ENCODE measurements at regions of chr3 and their contacts with region 1.

Region 1: GRCh38 chr3:132029182-132029902 is 5.5 kb downstream of the CPNE4 start:
- DNase-seq: peak; percentile 32
- ATAC-seq: no peak
- H3K4me3 ChIP-seq: no peak overlapping the region
- H3K4me3 Mint-ChIP-seq: no peak overlapping the region
- H3K27ac ChIP-seq: no peak overlapping the region
- H3K27ac Mint-ChIP-seq: no peak overlapping the region
- H3K4me1 ChIP-seq: no peaks in the 10 kb centered on the region
- H3K4me1 Mint-ChIP-seq: peaks cover 2% of the 10 kb centered on the region
- H3K27me3 ChIP-seq: peaks cover 0 to 12% (median 7%) of the 10 kb centered on the region in 4 experiments
- H3K27me3 Mint-ChIP-seq: peaks cover 49% of the 10 kb centered on the region
- CTCF ChIP-seq: peak; percentile 58

Region 2: DNA sequence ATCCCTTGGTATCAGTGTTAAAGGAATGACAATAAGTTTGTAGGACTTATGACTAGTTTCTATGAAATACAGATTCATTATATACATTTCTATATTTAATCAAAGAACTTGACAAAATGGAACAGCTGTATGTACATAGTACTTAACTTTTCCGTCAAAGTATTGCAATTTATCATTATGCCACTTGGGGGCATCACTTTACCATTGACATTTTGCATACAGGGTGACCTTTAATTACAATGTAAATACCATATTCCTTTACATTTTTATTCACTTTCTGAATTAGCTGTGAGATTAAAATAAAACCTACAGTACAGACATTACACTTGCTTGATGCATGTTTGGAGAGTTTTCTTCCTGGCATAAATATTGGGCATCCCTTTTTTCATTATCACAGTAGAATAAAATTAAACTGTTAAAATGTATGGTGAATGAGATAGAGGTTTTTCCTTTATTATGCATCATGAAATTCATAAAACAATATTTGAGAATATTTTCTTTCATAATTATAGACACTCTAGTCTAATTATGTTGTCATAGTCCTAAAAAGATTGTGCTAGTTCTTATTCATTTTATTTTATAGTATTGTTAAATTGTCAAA is 995.8 kb before region 1 on chr3:
- CTCF ChIA-PET with region 1: interaction called, 12 read pairs
- POLR2A ChIA-PET with region 1: no interaction called
- intact Hi-C with region 1: no loop called
- DNase-seq: peak; percentile 62
- ATAC-seq: peak; percentile 54
- H3K4me3 ChIP-seq: no peak overlapping the region
- H3K4me3 Mint-ChIP-seq: no peak overlapping the region
- H3K27ac ChIP-seq: no peak overlapping the region
- H3K27ac Mint-ChIP-seq: no peak overlapping the region
- H3K4me1 ChIP-seq: no peaks in the 10 kb centered on the region
- H3K4me1 Mint-ChIP-seq: no peaks in the 10 kb centered on the region
- H3K27me3 ChIP-seq: no peaks in the 10 kb centered on the region
- H3K27me3 Mint-ChIP-seq: no peaks in the 10 kb centered on the region
- CTCF ChIP-seq: peak; percentile 87

Region 3: GRCh38 chr3:132180337-132180791 is 151.0 kb after region 1 on chr3:
- CTCF ChIA-PET with region 1: no interaction called
- POLR2A ChIA-PET with region 1: no interaction called
- intact Hi-C with region 1: no loop called
- DNase-seq: peak; percentile 34
- ATAC-seq: no peak
- H3K4me3 ChIP-seq: no peak overlapping the region
- H3K4me3 Mint-ChIP-seq: no peak overlapping the region
- H3K27ac ChIP-seq: no peak overlapping the region
- H3K27ac Mint-ChIP-seq: no peak overlapping the region
- H3K4me1 ChIP-seq: no peaks in the 10 kb centered on the region
- H3K4me1 Mint-ChIP-seq: peaks cover 2% of the 10 kb centered on the region
- H3K27me3 ChIP-seq: peaks cover 0 to 5% (median 0%) of the 10 kb centered on the region in 4 experiments
- H3K27me3 Mint-ChIP-seq: peaks cover 9% of the 10 kb centered on the region
- CTCF ChIP-seq: peak; percentile 58